ENCODE measurements at regions of chr4 and their contacts with region 1.

Region 1: GRCh38 chr4:88989990-88990389 is 67.0 kb downstream of the FAM13A start:
- DNase-seq: no peak
- ATAC-seq: no peak
- H3K4me3 ChIP-seq: no peak overlapping the region
- H3K27ac ChIP-seq: no peak overlapping the region
- H3K4me1 ChIP-seq: no peaks in the 10 kb centered on the region
- H3K27me3 ChIP-seq: no peaks in the 10 kb centered on the region
- CTCF ChIP-seq: no peak
- EP300 ChIP-seq: no peak
- POLR2A ChIP-seq: no peak
- RAD21 ChIP-seq: no peak

Region 2: DNA sequence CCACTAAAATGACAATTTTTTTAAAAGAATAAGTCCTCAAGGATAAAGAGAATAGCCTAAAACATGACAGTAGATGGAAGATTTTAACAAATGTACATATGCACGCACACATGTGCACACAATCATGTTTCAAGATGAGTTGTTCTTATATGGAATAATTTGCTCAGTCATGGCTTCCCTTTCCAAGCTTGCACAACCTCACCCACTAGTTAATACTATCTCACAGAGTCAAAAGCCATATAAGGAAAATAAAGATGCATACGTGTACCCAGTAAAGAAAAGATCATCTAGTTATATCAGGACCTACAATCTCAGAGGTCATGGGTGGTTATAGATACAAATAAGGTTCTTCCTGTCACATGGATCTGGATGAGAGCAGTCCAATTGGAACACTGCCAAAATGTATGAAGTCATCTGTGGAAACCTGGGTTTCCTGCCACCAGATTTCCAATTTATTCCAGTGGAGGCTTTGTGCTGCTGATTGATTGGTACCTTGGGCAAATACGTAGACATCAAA is 10.9 kb after region 1 on chr4:
- CTCF ChIA-PET with region 1: interaction called, 4 read pairs
- POLR2A ChIA-PET with region 1: interaction called, 5 read pairs
- RAD21 ChIA-PET with region 1: interaction called, 6 read pairs
- SMC1A ChIA-PET with region 1: interaction called, 13 read pairs
- in situ Hi-C with region 1: no loop called
- intact Hi-C with region 1: no loop called
- DNase-seq: no peak
- ATAC-seq: no peak
- H3K4me3 ChIP-seq: no peak overlapping the region
- H3K27ac ChIP-seq: no peak overlapping the region
- H3K4me1 ChIP-seq: no peaks in the 10 kb centered on the region
- H3K27me3 ChIP-seq: no peaks in the 10 kb centered on the region
- CTCF ChIP-seq: no peak
- EP300 ChIP-seq: no peak
- POLR2A ChIP-seq: no peak
- RAD21 ChIP-seq: no peak

Region 3: GRCh38 chr4:89184407-89184806 is 194.4 kb after region 1 on chr4:
- CTCF ChIA-PET with region 1: no interaction called
- POLR2A ChIA-PET with region 1: no interaction called
- RAD21 ChIA-PET with region 1: no interaction called
- SMC1A ChIA-PET with region 1: no interaction called
- in situ Hi-C with region 1: no loop called
- intact Hi-C with region 1: no loop called
- DNase-seq: no peak
- ATAC-seq: no peak
- H3K4me3 ChIP-seq: no peak overlapping the region
- H3K27ac ChIP-seq: no peak overlapping the region
- H3K4me1 ChIP-seq: no peaks in the 10 kb centered on the region
- H3K27me3 ChIP-seq: no peaks in the 10 kb centered on the region
- CTCF ChIP-seq: no peak
- EP300 ChIP-seq: no peak
- POLR2A ChIP-seq: no peak
- RAD21 ChIP-seq: no peak

Measured in GM12878 (cell line).